Thyroid gland (tissue), 4 donors: ENCODE measurements at regions of chr16 and their contacts with region 1.

Region 1: DNA sequence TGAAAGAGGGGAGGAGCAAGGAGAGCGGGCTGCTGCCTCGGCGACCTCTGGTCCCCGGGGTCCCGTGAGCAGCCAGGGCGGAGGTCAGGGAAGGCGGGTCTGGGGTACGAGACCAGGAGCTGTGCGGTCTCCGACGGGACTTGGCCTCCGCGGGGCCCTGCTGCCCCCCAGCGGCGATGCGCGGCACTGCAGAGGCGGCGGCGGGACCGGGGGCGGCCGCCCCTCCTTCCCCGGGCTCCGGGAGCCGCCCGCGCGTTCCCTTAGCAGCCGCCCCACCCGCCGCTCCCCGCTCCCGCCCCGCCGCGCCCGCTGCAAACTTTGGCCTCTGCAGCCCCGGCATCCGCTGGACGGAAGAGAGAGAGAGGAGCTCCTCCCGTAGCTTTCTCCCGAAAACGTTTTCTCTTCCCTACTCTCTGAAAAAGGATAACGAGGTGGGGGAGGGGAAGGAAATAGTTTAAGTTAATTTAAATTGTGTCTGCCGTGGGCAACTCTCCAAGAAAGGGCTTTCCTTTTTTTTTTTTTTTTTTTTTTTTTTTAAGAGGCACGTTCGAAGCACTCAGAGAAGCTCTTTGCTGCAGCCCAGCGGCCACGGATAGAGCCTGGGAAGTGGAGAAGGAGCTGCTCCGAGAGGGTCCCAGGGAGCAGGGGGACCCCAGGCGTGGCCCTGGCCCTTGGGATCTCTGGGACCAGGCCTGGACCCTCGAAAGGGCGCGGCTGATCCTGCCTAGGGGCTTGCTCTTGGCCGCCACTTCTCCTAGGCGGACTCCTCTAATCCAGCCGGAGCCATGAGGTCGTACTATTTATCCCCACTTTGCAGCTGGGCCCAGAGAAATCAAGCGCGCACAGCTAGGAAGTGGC is 43.2 kb downstream of the C16orf82 start:
- DNase-seq: peak; percentile 42 to 48
- H3K4me3 ChIP-seq: no peak overlapping the region
- H3K27ac ChIP-seq: peak overlapping the region in 1 of 3 donors; percentile 10
- H3K4me1 ChIP-seq: no peaks in the 10 kb centered on the region
- H3K27me3 ChIP-seq: peaks cover 4% of the 10 kb centered on the region
- CTCF ChIP-seq: peak; percentile 9 to 97 (median 68)
- POLR2A ChIP-seq: no peak

Region 2: DNA sequence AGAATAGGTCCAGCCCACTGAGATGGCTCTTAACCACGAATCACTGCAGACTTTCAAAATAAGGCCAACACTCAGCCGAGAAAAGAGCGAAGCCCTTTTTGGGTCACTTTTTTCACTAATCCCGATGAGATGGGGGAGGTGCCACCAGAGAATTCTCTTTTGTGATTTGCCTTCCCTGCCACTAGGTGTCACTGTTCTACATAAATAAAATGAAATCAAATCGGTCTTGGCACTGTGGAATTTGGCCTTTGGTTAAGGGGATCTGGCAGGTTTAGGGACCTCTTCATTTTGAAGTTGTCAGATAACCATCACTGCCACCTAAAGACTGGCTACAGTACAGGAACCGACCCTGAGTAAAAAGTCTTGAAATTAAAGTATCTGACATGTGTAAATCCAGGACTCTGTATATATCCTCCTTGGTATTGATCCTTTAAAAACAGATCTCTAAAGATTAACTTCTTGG is 1271.1 kb before region 1 on chr16:
- intact Hi-C with region 1: loop called (anchors 10 kb)
- DNase-seq: peak; percentile 8
- H3K4me3 ChIP-seq: no peak overlapping the region
- H3K27ac ChIP-seq: no peak overlapping the region
- H3K4me1 ChIP-seq: no peaks in the 10 kb centered on the region
- H3K27me3 ChIP-seq: no peaks in the 10 kb centered on the region
- CTCF ChIP-seq: peak; percentile 40 to 72 (median 60)
- POLR2A ChIP-seq: no peak

Region 3: GRCh38 chr16:27145630-27146029 is 35.7 kb after region 1 on chr16:
- intact Hi-C with region 1: no loop called
- DNase-seq: no peak
- H3K4me3 ChIP-seq: no peak overlapping the region
- H3K27ac ChIP-seq: no peak overlapping the region
- H3K4me1 ChIP-seq: no peaks in the 10 kb centered on the region
- H3K27me3 ChIP-seq: no peaks in the 10 kb centered on the region
- CTCF ChIP-seq: no peak
- POLR2A ChIP-seq: no peak